Activated B cell treated with CpG ODN at 0.5 μM for 24 hours (primary cell): ENCODE measurements at regions of chr10 and their contacts with region 1.

Region 1: DNA sequence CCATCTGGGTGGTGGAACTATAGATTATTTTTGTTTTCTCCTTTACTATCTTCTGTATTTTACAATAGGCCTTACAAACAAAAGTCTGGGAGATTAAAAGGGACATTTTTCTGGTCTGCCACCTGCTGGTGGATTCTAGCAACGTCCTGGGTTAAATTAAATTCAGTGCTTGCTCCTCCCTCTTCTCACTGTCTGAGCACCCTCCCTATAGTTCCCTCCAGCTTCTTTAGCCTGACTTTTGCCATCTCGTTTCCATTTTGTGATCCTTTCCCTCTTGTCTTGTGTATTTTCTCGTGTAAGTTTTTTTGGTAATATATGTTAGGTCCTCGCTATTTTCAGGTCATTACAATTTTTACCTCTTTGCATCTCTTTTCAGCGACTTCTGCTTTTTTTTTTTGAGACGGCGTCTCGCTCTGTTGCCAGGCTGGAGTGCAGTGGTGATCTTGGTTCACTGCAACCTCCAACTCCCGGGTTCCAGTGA is 16.1 kb downstream of the ANKRD16 start:
- DNase-seq: peak; percentile 46
- ATAC-seq: peak; percentile 95
- H3K4me3 Mint-ChIP-seq: peak overlapping the region; percentile 82
- H3K27ac Mint-ChIP-seq: peak overlapping the region; percentile 92
- H3K4me1 Mint-ChIP-seq: peaks cover 28% of the 10 kb centered on the region
- H3K27me3 Mint-ChIP-seq: no peaks in the 10 kb centered on the region
- CTCF ChIP-seq: no peak

Region 2: GRCh38 chr10:5446390-5446926 is 427.1 kb before region 1 on chr10:
- CTCF ChIA-PET with region 1: no interaction called
- POLR2A ChIA-PET with region 1: no interaction called
- intact Hi-C with region 1: loop called (anchors 10 kb)
- DNase-seq: peak; percentile 90
- ATAC-seq: peak; percentile 91
- H3K4me3 Mint-ChIP-seq: peak overlapping the region; percentile 86
- H3K27ac Mint-ChIP-seq: peak overlapping the region; percentile 87
- H3K4me1 Mint-ChIP-seq: peaks cover 56% of the 10 kb centered on the region
- H3K27me3 Mint-ChIP-seq: no peaks in the 10 kb centered on the region
- CTCF ChIP-seq: no peak

Region 3: GRCh38 chr10:5776136-5776880 is 97.2 kb before region 1 on chr10:
- CTCF ChIA-PET with region 1: no interaction called
- POLR2A ChIA-PET with region 1: no interaction called
- intact Hi-C with region 1: loop called (anchors 1 kb)
- DNase-seq: no peak
- ATAC-seq: no peak
- H3K4me3 Mint-ChIP-seq: no peak overlapping the region
- H3K27ac Mint-ChIP-seq: peak overlapping the region; percentile 85
- H3K4me1 Mint-ChIP-seq: peaks cover 54% of the 10 kb centered on the region
- H3K27me3 Mint-ChIP-seq: no peaks in the 10 kb centered on the region
- CTCF ChIP-seq: no peak

Region 4: GRCh38 chr10:5818894-5819293 is 54.7 kb before region 1 on chr10:
- CTCF ChIA-PET with region 1: interaction called, 8 read pairs
- POLR2A ChIA-PET with region 1: interaction called, 42 read pairs
- intact Hi-C with region 1: no loop called
- DNase-seq: no peak
- ATAC-seq: peak; percentile 51
- H3K4me3 Mint-ChIP-seq: peak overlapping the region; percentile 75
- H3K27ac Mint-ChIP-seq: peak overlapping the region; percentile 94
- H3K4me1 Mint-ChIP-seq: peaks cover 74% of the 10 kb centered on the region
- H3K27me3 Mint-ChIP-seq: no peaks in the 10 kb centered on the region
- CTCF ChIP-seq: no peak

Region 5: GRCh38 chr10:5840314-5841307 is 32.9 kb before region 1 on chr10:
- CTCF ChIA-PET with region 1: interaction called, 11 read pairs
- POLR2A ChIA-PET with region 1: interaction called, 12 read pairs
- intact Hi-C with region 1: loop called (anchors 1 kb)
- DNase-seq: peak; percentile 78
- ATAC-seq: peak; percentile 83
- H3K4me3 Mint-ChIP-seq: peak overlapping the region; percentile 84
- H3K27ac Mint-ChIP-seq: peak overlapping the region; percentile 98
- H3K4me1 Mint-ChIP-seq: peaks cover 79% of the 10 kb centered on the region
- H3K27me3 Mint-ChIP-seq: no peaks in the 10 kb centered on the region
- CTCF ChIP-seq: no peak

Region 6: GRCh38 chr10:5862360-5862961 is 11.1 kb before region 1 on chr10:
- CTCF ChIA-PET with region 1: interaction called, 4 read pairs
- POLR2A ChIA-PET with region 1: interaction called, 3 read pairs
- intact Hi-C with region 1: loop called (anchors 1 kb)
- DNase-seq: no peak
- ATAC-seq: peak; percentile 71
- H3K4me3 Mint-ChIP-seq: peak overlapping the region; percentile 61
- H3K27ac Mint-ChIP-seq: peak overlapping the region; percentile 87
- H3K4me1 Mint-ChIP-seq: peaks cover 41% of the 10 kb centered on the region
- H3K27me3 Mint-ChIP-seq: no peaks in the 10 kb centered on the region
- CTCF ChIP-seq: no peak

Region 7: GRCh38 chr10:5960070-5960972 is 86.8 kb after region 1 on chr10:
- CTCF ChIA-PET with region 1: no interaction called
- POLR2A ChIA-PET with region 1: no interaction called
- intact Hi-C with region 1: no loop called
- DNase-seq: no peak
- ATAC-seq: no peak
- H3K4me3 Mint-ChIP-seq: no peak overlapping the region
- H3K27ac Mint-ChIP-seq: no peak overlapping the region
- H3K4me1 Mint-ChIP-seq: no peaks in the 10 kb centered on the region
- H3K27me3 Mint-ChIP-seq: no peaks in the 10 kb centered on the region
- CTCF ChIP-seq: no peak